ENCODE measurements at regions of chr22 and their contacts with region 1.

Region 1: DNA sequence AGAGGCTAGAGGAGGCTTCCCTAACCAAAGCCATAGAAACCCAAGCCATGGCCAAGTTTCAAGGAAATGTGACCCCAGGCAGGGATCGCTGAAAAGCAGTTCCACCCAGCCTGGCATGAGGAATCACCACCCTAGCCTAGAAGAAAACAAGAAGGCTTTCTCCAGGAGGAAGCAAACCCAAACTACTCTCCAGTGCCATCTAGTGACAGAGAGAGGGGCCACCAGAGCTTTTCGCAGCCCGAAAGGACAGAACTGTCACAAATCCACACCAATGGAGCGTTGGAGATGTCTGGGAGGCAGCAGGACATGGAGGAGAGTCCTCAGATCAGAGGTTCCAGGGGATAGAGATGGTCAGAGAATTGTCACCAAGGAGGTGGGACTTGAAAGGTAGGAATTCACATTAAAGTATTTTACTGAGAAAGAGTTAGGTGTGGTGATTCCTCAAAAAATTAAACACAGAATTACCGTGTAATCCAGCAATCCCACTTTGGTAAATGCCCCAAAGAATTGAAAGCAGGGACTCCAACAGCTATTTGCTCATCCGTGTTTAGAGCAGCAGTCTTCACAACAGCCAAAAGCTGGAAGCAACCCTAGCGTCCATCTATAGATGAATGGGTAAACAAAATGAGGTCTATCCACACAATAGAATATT is 67.3 kb upstream of the NUP50 start:
- DNase-seq: peak; percentile 83
- CTCF ChIP-seq: peak; percentile 73

Region 2: GRCh38 chr22:44828193-44828592 is 268.2 kb before region 1 on chr22:
- in situ Hi-C with region 1: loop called (anchors 10 kb)
- DNase-seq: peak; percentile 69
- CTCF ChIP-seq: peak; percentile 36

Region 3: GRCh38 chr22:44988671-44989070 is 107.7 kb before region 1 on chr22:
- in situ Hi-C with region 1: loop called (anchors 10 kb)
- DNase-seq: no peak
- CTCF ChIP-seq: no peak

Region 4: GRCh38 chr22:45268958-45269844 is 172.8 kb after region 1 on chr22:
- in situ Hi-C with region 1: no loop called
- DNase-seq: peak; percentile 92
- CTCF ChIP-seq: peak; percentile 96

Measured in GM13976 (cell line).